PC-9 (cell line): ENCODE measurements at regions of chr10 and their contacts with region 1.

Region 1: DNA sequence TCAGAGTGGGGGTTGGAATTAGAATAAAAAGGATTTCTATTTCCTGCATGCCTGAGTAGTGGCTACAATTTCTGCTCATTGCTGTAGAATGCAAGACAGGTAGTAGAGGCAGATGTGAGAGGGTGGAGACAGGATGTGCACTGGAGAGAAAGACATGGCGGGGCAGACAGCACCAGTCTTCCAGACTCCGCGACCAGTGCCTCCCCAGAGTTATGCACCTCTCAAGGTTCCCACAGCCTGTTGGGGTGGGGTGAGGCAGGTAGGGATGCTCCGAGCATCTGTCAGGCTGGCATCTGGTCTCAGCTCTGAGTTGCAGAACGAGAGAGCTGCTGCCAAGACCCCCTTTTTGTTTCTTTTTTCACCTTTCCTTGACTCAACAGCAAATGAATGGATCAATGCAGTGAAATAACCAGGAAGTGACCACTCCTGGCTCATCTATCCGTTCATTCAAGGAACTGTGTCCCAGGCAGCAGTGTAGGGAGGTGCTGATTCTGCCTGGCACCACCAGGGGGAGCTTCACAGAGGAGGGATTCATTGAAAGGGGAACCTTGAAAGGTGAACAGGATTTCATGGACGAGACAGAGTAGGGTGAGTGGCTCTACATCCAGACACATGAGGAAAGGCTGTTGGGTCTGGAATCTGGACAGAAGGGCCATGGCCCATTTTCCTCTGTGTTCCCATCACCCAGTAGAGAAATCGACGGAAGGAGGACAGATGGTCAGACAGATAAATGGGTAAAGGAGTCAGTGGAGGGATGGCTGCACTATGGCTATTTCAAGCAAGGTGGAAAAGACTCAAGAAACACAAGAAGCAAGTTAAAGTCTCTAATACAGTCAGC is 17.2 kb upstream of the SLC18A3 start:
- DNase-seq: peak; percentile 43 to 65
- H3K4me3 ChIP-seq: no peak overlapping the region
- H3K27ac ChIP-seq: no peak overlapping the region
- H3K4me1 ChIP-seq: no peaks in the 10 kb centered on the region
- H3K27me3 ChIP-seq: no peaks in the 10 kb centered on the region
- CTCF ChIP-seq: peak; percentile 95

Region 2: DNA sequence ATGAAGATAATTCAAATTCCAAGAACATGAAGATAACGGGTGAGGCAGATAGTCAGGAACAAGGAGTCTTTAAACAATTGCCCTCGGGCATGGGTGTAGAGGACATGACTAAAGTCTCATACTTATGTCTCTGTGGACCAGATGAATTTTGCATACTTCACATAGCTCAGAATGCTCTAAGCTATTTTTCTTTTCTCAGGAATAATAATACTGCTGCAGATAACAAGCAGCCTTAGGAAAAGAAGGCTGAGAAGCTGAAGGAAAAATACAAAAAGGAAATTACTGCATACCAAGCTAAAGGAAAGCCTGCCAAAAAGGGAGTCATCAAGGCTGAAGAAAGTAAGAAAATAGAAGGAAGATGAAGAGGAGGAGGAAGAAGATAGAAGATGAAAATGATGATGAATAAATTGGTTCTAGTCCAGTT is 40.7 kb before region 1 on chr10:
- CTCF ChIA-PET with region 1: no interaction called
- POLR2A ChIA-PET with region 1: interaction called, 3 read pairs
- intact Hi-C with region 1: loop called (anchors 2 kb)
- DNase-seq: peak; percentile 67 to 97
- H3K4me3 ChIP-seq: no peak overlapping the region; the same call in 1 of the 2 replicates
- H3K27ac ChIP-seq: peak overlapping the region; percentile 89
- H3K4me1 ChIP-seq: peaks cover 52% of the 10 kb centered on the region
- H3K27me3 ChIP-seq: no peaks in the 10 kb centered on the region
- CTCF ChIP-seq: no peak

Region 3: DNA sequence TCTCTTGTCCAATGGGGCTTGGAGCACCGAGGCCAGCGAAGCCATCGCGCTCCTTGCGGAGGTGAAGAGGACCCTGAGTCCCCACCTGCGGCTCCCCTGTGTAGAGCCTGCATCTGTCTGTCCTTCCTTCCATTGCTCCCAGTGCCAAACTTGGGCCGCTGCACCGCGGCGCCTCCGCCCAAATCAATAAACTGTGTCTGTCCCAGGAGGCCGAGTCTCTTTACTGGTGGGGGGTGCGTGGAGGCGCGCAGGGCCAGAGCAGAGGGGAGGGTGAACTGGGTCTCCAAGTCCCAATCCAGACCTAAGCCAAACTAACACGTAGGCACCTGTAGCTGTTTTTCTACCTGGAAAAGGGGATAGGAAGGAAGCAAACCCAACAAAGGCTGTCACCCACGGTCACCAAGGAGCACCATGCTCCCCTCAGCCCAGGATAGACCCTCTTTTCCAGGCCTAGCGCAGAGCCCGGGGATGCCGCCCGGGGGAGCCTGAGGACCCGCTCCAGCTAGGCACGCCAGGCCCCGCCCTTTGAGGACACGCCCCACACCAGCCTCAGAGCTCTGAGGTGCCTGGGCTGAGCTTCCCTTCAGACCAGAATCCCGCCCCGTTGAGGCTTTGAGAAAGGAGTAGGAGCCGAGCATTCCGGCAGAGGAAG is 19.7 kb after region 1 on chr10:
- CTCF ChIA-PET with region 1: no interaction called
- POLR2A ChIA-PET with region 1: no interaction called
- intact Hi-C with region 1: no loop called
- DNase-seq: no peak
- H3K4me3 ChIP-seq: no peak overlapping the region
- H3K27ac ChIP-seq: no peak overlapping the region
- H3K4me1 ChIP-seq: no peaks in the 10 kb centered on the region
- H3K27me3 ChIP-seq: peaks cover 33% of the 10 kb centered on the region
- CTCF ChIP-seq: no peak

Region 4: DNA sequence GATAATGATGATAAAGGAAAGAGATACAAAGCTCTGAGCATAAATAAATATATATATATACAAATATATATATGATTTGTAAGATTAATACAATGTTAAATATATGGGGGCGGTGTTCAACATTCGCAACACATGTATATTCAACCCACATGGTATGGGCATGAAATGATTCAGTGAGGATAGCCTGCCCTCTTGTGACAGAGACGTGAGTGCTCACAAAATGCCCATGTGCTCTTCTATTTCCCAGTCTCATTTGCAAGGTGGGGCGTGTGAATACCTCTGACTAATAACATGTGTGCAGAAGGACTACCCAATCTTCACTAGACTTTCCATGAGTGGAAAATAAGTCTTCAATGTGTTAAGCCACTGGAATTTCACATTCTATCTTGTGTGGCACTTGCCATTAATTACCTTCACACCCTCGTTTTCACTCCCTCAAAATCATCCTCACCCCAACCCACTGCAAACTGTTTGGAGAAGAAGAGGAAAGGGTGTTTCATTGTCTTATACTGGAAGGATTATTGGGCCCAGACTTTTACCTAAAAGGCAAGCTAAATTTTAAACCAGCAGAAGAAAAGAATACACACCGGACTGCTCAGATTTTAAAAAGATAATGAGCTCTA is 631.5 kb after region 1 on chr10:
- CTCF ChIA-PET with region 1: no interaction called
- POLR2A ChIA-PET with region 1: no interaction called
- intact Hi-C with region 1: loop called (anchors 1 kb)
- DNase-seq: peak; percentile 36 to 68
- H3K4me3 ChIP-seq: no peak overlapping the region
- H3K27ac ChIP-seq: no peak overlapping the region
- H3K4me1 ChIP-seq: no peaks in the 10 kb centered on the region
- H3K27me3 ChIP-seq: no peaks in the 10 kb centered on the region
- CTCF ChIP-seq: peak; percentile 68